ENCODE measurements at regions of chr1 and their contacts with region 1.

Region 1: DNA sequence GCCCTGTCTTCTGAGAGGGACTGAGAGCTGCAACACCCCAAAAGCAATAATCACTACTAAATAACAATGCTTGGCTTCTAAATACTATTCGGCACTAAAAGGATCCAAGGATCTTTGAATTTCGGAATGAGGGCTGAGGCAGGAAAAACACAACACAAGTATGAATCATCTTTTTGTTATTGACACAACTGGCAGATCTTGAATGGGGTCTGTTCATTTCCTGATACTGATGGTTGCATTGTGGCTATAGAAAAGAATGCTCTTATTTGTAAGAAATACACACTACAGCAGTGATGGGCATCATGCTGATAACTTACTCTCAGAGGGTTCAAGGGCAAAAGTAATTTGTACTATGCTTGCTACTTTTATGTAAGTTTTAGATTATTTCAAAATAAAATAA is 149.2 kb upstream of the PLD5 start:
- DNase-seq: no peak
- H3K4me3 Mint-ChIP-seq: no peak overlapping the region
- H3K27ac Mint-ChIP-seq: no peak overlapping the region
- H3K4me1 Mint-ChIP-seq: no peaks in the 10 kb centered on the region
- H3K27me3 Mint-ChIP-seq: no peaks in the 10 kb centered on the region

Region 2: DNA sequence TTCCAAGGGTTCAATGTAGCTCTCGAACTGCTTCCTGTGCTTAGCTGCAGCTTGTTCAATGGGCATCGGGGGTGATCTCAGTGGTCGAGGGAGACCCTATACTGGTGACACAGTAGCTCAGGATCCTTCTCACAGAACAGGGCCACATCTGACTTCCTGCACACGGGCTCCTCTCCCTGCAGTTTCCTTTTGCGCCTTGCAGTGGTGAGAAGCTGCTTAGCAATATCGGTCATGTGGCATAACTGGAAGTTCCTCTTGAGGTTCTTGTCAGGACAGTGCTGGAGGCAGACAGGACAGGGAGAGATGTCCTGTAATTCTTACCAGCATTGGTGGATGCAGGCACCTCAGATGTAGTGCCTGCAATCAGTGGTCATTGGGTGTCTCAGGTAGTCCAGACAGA is 534.2 kb before region 1 on chr1:
- intact Hi-C with region 1: no loop called
- DNase-seq: no peak
- H3K4me3 Mint-ChIP-seq: no peak overlapping the region
- H3K27ac Mint-ChIP-seq: no peak overlapping the region
- H3K4me1 Mint-ChIP-seq: no peaks in the 10 kb centered on the region
- H3K27me3 Mint-ChIP-seq: no peaks in the 10 kb centered on the region

Region 3: GRCh38 chr1:242745079-242745478 is 71.4 kb after region 1 on chr1:
- intact Hi-C with region 1: loop called (anchors 1 kb)
- DNase-seq: no peak
- H3K4me3 Mint-ChIP-seq: no peak overlapping the region
- H3K27ac Mint-ChIP-seq: no peak overlapping the region
- H3K4me1 Mint-ChIP-seq: no peaks in the 10 kb centered on the region
- H3K27me3 Mint-ChIP-seq: no peaks in the 10 kb centered on the region

Measured in activated T-helper 1 cell treated with anti-CD3 and anti-CD28 coated beads, Interleukin-12 subunit alpha, Interleukin-12 subunit beta, Interleukin-2, Interleukin-4 antibody, amounts not matched to agents 30 ng/mL and 10 ng/mL and 1 ng/mL, durations not matched to agents 14 hours and 24 hours and 36 hours (primary cell).